Tibial artery (tissue), 4 donors: ENCODE measurements at regions of chr16 and their contacts with region 1.

Region 1: DNA sequence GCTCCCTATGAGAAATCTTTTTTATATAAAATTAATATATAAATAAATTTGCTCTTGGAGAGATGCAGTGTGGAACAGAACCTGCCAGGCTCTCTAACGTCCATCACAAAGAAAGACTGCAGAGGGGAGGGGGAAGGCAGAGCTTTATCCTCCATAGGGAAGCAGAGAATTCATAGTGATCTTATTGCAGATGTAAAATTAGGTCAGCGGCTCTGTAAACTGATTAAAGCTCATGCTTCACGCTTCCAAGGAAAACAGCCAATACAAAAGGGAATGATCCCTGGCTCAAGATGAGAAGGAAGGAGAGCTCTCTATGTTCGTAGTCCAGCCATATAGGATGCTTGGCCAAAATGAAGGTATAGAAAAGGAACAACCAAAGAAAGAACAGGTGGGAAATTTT is 532.3 kb upstream of the PSMD7 start:
- DNase-seq: no peak
- H3K4me3 ChIP-seq: no peak overlapping the region
- H3K27ac ChIP-seq: peak overlapping the region; percentile 8 to 44
- H3K4me1 ChIP-seq: peaks cover 0 to 40% (median 13%) of the 10 kb centered on the region in 4 donors
- H3K27me3 ChIP-seq: peaks cover 0 to 3% of the 10 kb centered on the region in 2 donors
- CTCF ChIP-seq: no peak

Region 2: GRCh38 chr16:72832621-72833248 is 931.6 kb before region 1 on chr16:
- intact Hi-C with region 1: loop called (anchors 5 kb)
- DNase-seq: peak; percentile 86 to 89
- H3K4me3 ChIP-seq: no peak overlapping the region
- H3K27ac ChIP-seq: peak overlapping the region; percentile 17 to 67
- H3K4me1 ChIP-seq: peaks cover 0 to 55% (median 24%) of the 10 kb centered on the region in 4 donors
- H3K27me3 ChIP-seq: no peaks in the 10 kb centered on the region
- CTCF ChIP-seq: peak; percentile 92 to 98

Region 3: DNA sequence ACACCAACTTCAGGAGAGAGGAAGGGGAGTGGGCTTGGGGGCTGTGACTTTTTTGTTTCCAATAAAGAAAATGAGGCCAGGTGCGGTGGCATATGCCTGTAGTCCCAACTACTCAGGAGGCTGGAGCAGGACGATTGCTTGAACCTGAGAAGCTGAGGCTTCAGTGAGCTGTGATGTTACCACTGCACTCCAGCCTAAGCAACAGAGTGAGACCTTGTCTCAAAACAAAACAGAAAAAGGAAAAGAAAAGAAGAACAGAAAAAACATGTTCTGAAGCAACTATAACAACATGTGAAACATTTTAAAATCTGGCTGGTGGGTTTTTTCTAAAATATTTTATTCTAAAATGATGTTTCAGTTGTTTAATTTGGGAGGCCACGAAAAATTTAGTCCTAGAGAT is 162.4 kb before region 1 on chr16:
- intact Hi-C with region 1: no loop called
- DNase-seq: no peak
- H3K4me3 ChIP-seq: no peak overlapping the region
- H3K27ac ChIP-seq: no peak overlapping the region
- H3K4me1 ChIP-seq: no peaks in the 10 kb centered on the region
- H3K27me3 ChIP-seq: no peaks in the 10 kb centered on the region
- CTCF ChIP-seq: no peak